ENCODE measurements at regions of chr11 and their contacts with region 1.

Region 1: GRCh38 chr11:99383648-99384245 is 363.0 kb downstream of the CNTN5 start:
- DNase-seq: no peak
- ATAC-seq: no peak
- H3K4me3 ChIP-seq: no peak overlapping the region
- H3K4me3 Mint-ChIP-seq: no peak overlapping the region
- H3K27ac ChIP-seq: no peak overlapping the region
- H3K27ac Mint-ChIP-seq: no peak overlapping the region
- H3K4me1 ChIP-seq: no peaks in the 10 kb centered on the region
- H3K4me1 Mint-ChIP-seq: no peaks in the 10 kb centered on the region
- H3K27me3 ChIP-seq: no peaks in the 10 kb centered on the region
- H3K27me3 Mint-ChIP-seq: no peaks in the 10 kb centered on the region

Region 2: GRCh38 chr11:99066618-99067317 is 317.0 kb before region 1 on chr11:
- CTCF ChIA-PET with region 1: no interaction called
- POLR2A ChIA-PET with region 1: no interaction called
- intact Hi-C with region 1: no loop called
- DNase-seq: no peak
- ATAC-seq: no peak
- H3K4me3 ChIP-seq: no peak overlapping the region
- H3K4me3 Mint-ChIP-seq: no peak overlapping the region
- H3K27ac ChIP-seq: no peak overlapping the region
- H3K27ac Mint-ChIP-seq: no peak overlapping the region
- H3K4me1 ChIP-seq: peaks cover 0 to 2% of the 10 kb centered on the region in 2 donors
- H3K4me1 Mint-ChIP-seq: peaks cover 4 to 16% (median 6%) of the 10 kb centered on the region in 7 donors
- H3K27me3 ChIP-seq: no peaks in the 10 kb centered on the region
- H3K27me3 Mint-ChIP-seq: no peaks in the 10 kb centered on the region

Region 3: GRCh38 chr11:101202614-101203013 is 1818.9 kb after region 1 on chr11:
- CTCF ChIA-PET with region 1: no interaction called
- POLR2A ChIA-PET with region 1: no interaction called
- intact Hi-C with region 1: loop called in 1 of 2 experiments (anchors 5 kb)
- DNase-seq: no peak
- ATAC-seq: no peak
- H3K4me3 ChIP-seq: no peak overlapping the region
- H3K4me3 Mint-ChIP-seq: no peak overlapping the region
- H3K27ac ChIP-seq: no peak overlapping the region
- H3K27ac Mint-ChIP-seq: no peak overlapping the region
- H3K4me1 ChIP-seq: no peaks in the 10 kb centered on the region
- H3K4me1 Mint-ChIP-seq: no peaks in the 10 kb centered on the region
- H3K27me3 ChIP-seq: no peaks in the 10 kb centered on the region
- H3K27me3 Mint-ChIP-seq: no peaks in the 10 kb centered on the region